ENCODE measurements at regions of chr9 and their contacts with region 1.

Region 1: GRCh38 chr9:129436751-129437625 is 183.9 kb downstream of the C9orf50 start:
- DNase-seq: peak in 9 of 10 donors; percentile 19 to 69 (median 35)
- ATAC-seq: peak; percentile 78 to 83
- H3K4me3 Mint-ChIP-seq: peak overlapping the region; percentile 74 to 96 (median 89)
- H3K27ac Mint-ChIP-seq: peak overlapping the region; percentile 18 to 87 (median 72)
- H3K4me1 Mint-ChIP-seq: peaks cover 12 to 36% (median 32%) of the 10 kb centered on the region in 4 donors
- H3K27me3 Mint-ChIP-seq: peaks cover 8 to 47% (median 34%) of the 10 kb centered on the region in 5 donors

Region 2: GRCh38 chr9:129413537-129414376 is 23.2 kb before region 1 on chr9:
- POLR2A ChIA-PET with region 1: interaction called, 11 read pairs
- DNase-seq: peak; percentile 96 to 100 (median 98)
- ATAC-seq: peak; percentile 77 to 82
- H3K4me3 Mint-ChIP-seq: peak overlapping the region; percentile 78 to 94 (median 86)
- H3K27ac Mint-ChIP-seq: peak overlapping the region; percentile 96 to 99 (median 99)
- H3K4me1 Mint-ChIP-seq: peaks cover 15 to 54% (median 41%) of the 10 kb centered on the region in 4 donors
- H3K27me3 Mint-ChIP-seq: peaks cover 0 to 3% (median 0%) of the 10 kb centered on the region in 5 donors

Region 3: GRCh38 chr9:129467004-129467588 is 30.1 kb after region 1 on chr9:
- POLR2A ChIA-PET with region 1: no interaction called
- DNase-seq: no peak
- ATAC-seq: no peak
- H3K4me3 Mint-ChIP-seq: no peak overlapping the region
- H3K27ac Mint-ChIP-seq: no peak overlapping the region
- H3K4me1 Mint-ChIP-seq: peaks cover 1 to 13% (median 7%) of the 10 kb centered on the region in 4 donors
- H3K27me3 Mint-ChIP-seq: peaks cover 0 to 1% (median 0%) of the 10 kb centered on the region in 5 donors

Measured in naive thymus-derived CD8-positive, alpha-beta T cell (primary cell).